ENCODE measurements at regions of chr17 and their contacts with region 1.

Region 1: GRCh38 chr17:69523244-69523861 is 108.9 kb downstream of the MAP2K6 start:
- DNase-seq: peak; percentile 72
- H3K4me3 Mint-ChIP-seq: no peak overlapping the region
- H3K27ac Mint-ChIP-seq: no peak overlapping the region
- H3K4me1 Mint-ChIP-seq: peaks cover 5% of the 10 kb centered on the region
- H3K27me3 Mint-ChIP-seq: no peaks in the 10 kb centered on the region
- CTCF ChIP-seq: peak; percentile 70

Region 2: GRCh38 chr17:69246726-69247375 is 276.5 kb before region 1 on chr17:
- CTCF ChIA-PET with region 1: interaction called, 9 read pairs
- POLR2A ChIA-PET with region 1: interaction called, 5 read pairs
- intact Hi-C with region 1: loop called (anchors 5 kb)
- DNase-seq: peak; percentile 62
- H3K4me3 Mint-ChIP-seq: no peak overlapping the region
- H3K27ac Mint-ChIP-seq: no peak overlapping the region
- H3K4me1 Mint-ChIP-seq: peaks cover 4% of the 10 kb centered on the region
- H3K27me3 Mint-ChIP-seq: no peaks in the 10 kb centered on the region
- CTCF ChIP-seq: peak; percentile 36

Region 3: DNA sequence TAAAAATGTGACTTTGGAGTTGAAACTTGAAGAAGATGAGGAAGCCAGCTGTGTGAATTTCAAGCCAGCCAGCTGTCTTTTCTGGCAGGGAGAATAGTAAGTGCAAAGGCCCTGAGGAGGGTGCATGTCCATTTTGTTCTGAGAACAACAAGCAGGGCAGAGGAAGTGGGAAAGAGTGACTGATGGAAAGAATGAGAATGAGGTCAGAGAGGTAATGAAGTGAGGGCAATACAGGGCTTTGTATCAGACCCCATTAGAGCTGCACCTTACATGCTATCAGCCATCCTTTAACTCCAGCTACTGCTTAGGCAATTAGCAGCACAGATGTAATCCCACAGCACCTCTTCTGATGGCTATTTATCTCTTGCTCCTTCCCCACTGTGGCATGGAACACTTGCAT is 162.2 kb before region 1 on chr17:
- CTCF ChIA-PET with region 1: interaction called, 10 read pairs
- POLR2A ChIA-PET with region 1: no interaction called
- intact Hi-C with region 1: no loop called
- DNase-seq: no peak
- H3K4me3 Mint-ChIP-seq: no peak overlapping the region
- H3K27ac Mint-ChIP-seq: no peak overlapping the region
- H3K4me1 Mint-ChIP-seq: peaks cover 9% of the 10 kb centered on the region
- H3K27me3 Mint-ChIP-seq: no peaks in the 10 kb centered on the region
- CTCF ChIP-seq: no peak

Region 4: DNA sequence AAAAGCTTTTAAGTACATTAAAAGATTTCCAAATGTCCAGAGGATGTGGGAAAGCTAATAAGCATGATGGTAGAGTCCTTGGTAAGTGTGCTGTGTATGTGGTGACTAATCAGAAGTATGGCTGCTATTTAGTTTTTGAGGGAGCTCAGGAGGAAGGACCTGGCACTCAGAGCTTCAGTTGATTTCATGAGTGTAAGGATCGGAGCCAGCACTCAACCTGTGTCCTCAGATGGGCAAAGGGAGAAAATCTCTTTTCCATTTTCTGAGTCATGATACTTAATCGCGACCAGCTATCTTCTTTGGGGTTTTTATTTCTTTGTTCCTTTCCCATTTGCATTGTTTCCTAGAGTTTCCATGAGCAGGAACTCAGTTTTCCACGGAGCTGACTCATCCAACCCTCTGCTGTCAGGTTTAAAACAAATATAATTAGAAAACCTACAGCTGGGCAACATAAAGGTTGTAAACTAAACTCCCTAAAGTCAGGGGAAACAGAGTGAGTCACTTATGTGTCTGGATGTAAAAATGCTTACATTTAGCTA is 16.5 kb after region 1 on chr17:
- CTCF ChIA-PET with region 1: interaction called, 23 read pairs
- POLR2A ChIA-PET with region 1: interaction called, 4 read pairs
- intact Hi-C with region 1: no loop called
- DNase-seq: peak; percentile 64
- H3K4me3 Mint-ChIP-seq: peak overlapping the region; percentile 38
- H3K27ac Mint-ChIP-seq: peak overlapping the region; percentile 86
- H3K4me1 Mint-ChIP-seq: peaks cover 16% of the 10 kb centered on the region
- H3K27me3 Mint-ChIP-seq: no peaks in the 10 kb centered on the region
- CTCF ChIP-seq: no peak

Region 5: GRCh38 chr17:70552230-70552981 is 1029.1 kb after region 1 on chr17:
- CTCF ChIA-PET with region 1: interaction called, 6 read pairs
- POLR2A ChIA-PET with region 1: no interaction called
- intact Hi-C with region 1: loop called (anchors 10 kb)
- DNase-seq: peak; percentile 57
- H3K4me3 Mint-ChIP-seq: no peak overlapping the region
- H3K27ac Mint-ChIP-seq: no peak overlapping the region
- H3K4me1 Mint-ChIP-seq: peaks cover 8% of the 10 kb centered on the region
- H3K27me3 Mint-ChIP-seq: no peaks in the 10 kb centered on the region
- CTCF ChIP-seq: peak; percentile 54

Measured in MCF 10A (cell line).